ENCODE measurements at regions of chr4 and their contacts with region 1.

Region 1: DNA sequence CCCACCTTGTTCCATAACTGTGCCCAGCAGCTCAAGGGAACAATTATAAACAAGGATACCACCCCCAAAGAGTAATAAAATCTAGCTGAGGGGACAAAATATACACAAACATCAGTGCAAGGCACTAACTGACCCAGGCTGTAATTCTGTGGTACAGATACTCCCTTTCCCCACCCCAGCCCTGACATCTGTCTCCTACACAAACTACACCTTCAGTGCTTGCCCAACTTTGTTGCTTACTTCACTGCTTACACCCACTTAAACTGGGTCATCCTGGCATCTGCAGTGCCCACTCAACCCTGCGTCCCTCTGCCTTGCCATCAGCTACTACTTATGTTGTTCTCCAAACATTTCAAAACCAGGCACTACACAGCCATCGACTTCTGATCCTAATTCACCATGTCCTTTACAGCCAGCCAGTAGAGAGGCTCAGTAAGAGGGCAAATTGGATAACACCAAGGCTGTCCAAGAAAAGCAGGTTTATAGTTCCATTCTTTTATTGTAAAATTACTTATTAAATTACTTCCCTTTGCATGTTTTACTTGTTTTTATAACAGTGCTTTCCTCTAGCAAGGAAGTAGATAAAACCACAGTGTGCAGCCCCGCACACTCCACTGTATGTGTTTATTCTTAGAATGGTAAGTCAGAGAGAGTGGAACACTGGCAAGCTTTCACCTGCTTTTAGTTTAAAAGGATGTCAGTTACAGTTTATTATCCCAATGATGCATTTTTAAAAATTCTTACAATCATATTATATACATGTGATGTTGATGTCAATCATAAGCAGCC is 149.6 kb downstream of the INPP4B start:
- DNase-seq: peak in 7 of 9 donors; percentile 25 to 49 (median 44)
- ATAC-seq: peak; percentile 77
- H3K4me3 ChIP-seq: peak overlapping the region; percentile 19
- H3K4me3 Mint-ChIP-seq: peak overlapping the region; percentile 31 to 87 (median 75)
- H3K27ac ChIP-seq: peak overlapping the region; percentile 65
- H3K27ac Mint-ChIP-seq: peak overlapping the region in 8 of 9 donors; percentile 87 to 98 (median 95)
- H3K4me1 ChIP-seq: peaks cover 41 to 64% of the 10 kb centered on the region in 2 donors
- H3K4me1 Mint-ChIP-seq: peaks cover 38 to 88% (median 72%) of the 10 kb centered on the region in 7 donors
- H3K27me3 ChIP-seq: no peaks in the 10 kb centered on the region
- H3K27me3 Mint-ChIP-seq: no peaks in the 10 kb centered on the region

Region 2: DNA sequence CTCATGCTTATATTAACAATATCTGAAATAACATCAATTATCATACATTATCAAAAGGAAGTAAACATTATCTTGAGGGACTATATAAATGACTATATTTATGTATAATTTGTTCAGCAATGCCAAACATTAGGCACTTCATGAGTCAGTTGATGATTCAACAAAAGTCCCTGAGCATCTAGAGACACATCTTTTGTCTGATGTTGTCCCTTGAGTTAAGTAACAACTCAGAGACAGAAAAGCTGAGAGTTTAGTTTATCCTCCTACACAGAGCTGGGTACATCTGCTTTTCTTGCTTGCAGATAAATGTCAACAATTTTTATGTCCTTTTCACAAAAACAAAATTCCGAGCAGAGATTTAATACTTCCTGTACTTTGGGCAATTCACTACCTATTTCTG is 161.5 kb before region 1 on chr4:
- CTCF ChIA-PET with region 1: no interaction called
- POLR2A ChIA-PET with region 1: no interaction called
- intact Hi-C with region 1: no loop called
- DNase-seq: no peak
- ATAC-seq: no peak
- H3K4me3 ChIP-seq: no peak overlapping the region
- H3K4me3 Mint-ChIP-seq: no peak overlapping the region
- H3K27ac ChIP-seq: no peak overlapping the region
- H3K27ac Mint-ChIP-seq: no peak overlapping the region
- H3K4me1 ChIP-seq: peaks cover 0 to 3% of the 10 kb centered on the region in 2 donors
- H3K4me1 Mint-ChIP-seq: peaks cover 12 to 27% (median 20%) of the 10 kb centered on the region in 7 donors
- H3K27me3 ChIP-seq: no peaks in the 10 kb centered on the region
- H3K27me3 Mint-ChIP-seq: peaks cover 0 to 5% (median 0%) of the 10 kb centered on the region in 5 donors

Region 3: DNA sequence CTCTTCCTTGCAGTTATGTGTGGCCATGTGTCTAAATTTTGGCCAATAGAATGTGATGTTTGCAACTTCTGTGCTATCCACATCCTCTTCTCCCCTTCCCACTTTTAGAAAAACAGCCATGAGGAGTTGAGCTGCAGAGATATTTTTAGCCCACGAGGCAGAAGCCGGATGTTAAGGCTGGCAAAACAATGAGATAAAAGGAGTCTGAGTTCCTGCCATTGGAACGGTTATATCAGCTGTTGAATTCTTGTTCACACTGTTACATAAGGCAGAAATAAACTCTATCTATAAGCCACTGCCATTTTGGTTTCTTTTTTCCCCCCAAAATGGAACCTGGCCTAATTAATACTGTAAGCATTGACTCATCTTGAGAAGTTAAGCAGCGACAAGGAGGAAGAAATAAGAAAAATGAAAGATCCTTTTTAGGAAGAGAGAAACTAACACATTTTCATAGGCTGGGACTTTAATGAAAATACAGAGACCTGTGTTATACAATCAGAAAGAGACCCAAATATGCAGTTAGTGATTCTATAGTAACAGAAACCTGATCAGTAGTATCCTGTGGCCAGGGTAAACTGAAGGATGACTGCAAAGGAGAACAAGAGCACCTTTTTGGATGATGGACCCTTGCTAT is 50.9 kb before region 1 on chr4:
- CTCF ChIA-PET with region 1: interaction called, 4 read pairs
- POLR2A ChIA-PET with region 1: interaction called, 5 read pairs
- intact Hi-C with region 1: loop called in 1 of 2 experiments (anchors 5 kb)
- DNase-seq: peak in 6 of 9 donors; percentile 4 to 42 (median 28)
- ATAC-seq: no peak
- H3K4me3 ChIP-seq: peak overlapping the region; percentile 4
- H3K4me3 Mint-ChIP-seq: peak overlapping the region; percentile 9 to 86 (median 74)
- H3K27ac ChIP-seq: no peak overlapping the region
- H3K27ac Mint-ChIP-seq: peak overlapping the region; percentile 72 to 92 (median 85)
- H3K4me1 ChIP-seq: peaks cover 0 to 14% of the 10 kb centered on the region in 2 donors
- H3K4me1 Mint-ChIP-seq: peaks cover 8 to 45% (median 35%) of the 10 kb centered on the region in 7 donors
- H3K27me3 ChIP-seq: no peaks in the 10 kb centered on the region
- H3K27me3 Mint-ChIP-seq: peaks cover 0 to 4% (median 0%) of the 10 kb centered on the region in 5 donors

Region 4: GRCh38 chr4:142713282-142714030 is 16.9 kb after region 1 on chr4:
- CTCF ChIA-PET with region 1: no interaction called
- POLR2A ChIA-PET with region 1: interaction called, 135 read pairs
- intact Hi-C with region 1: loop called in 1 of 2 experiments (anchors 2 kb)
- DNase-seq: no peak
- ATAC-seq: no peak
- H3K4me3 ChIP-seq: no peak overlapping the region
- H3K4me3 Mint-ChIP-seq: peak overlapping the region; percentile 20 to 81 (median 57)
- H3K27ac ChIP-seq: peak overlapping the region; percentile 41
- H3K27ac Mint-ChIP-seq: peak overlapping the region; percentile 61 to 95 (median 90)
- H3K4me1 ChIP-seq: peaks cover 6 to 31% of the 10 kb centered on the region in 2 donors
- H3K4me1 Mint-ChIP-seq: peaks cover 22 to 90% (median 67%) of the 10 kb centered on the region in 7 donors
- H3K27me3 ChIP-seq: no peaks in the 10 kb centered on the region
- H3K27me3 Mint-ChIP-seq: no peaks in the 10 kb centered on the region

Measured in naive thymus-derived CD4-positive, alpha-beta T cell (primary cell).